Dendritic cell treated with granulocyte-macrophage colony-stimulating factor and Interleukin-4, amounts not matched to agents 40 ng/mL and 50 ng/mL, for 4 days (primary cell): ENCODE measurements at regions of chr2 and their contacts with region 1.

Region 1: DNA sequence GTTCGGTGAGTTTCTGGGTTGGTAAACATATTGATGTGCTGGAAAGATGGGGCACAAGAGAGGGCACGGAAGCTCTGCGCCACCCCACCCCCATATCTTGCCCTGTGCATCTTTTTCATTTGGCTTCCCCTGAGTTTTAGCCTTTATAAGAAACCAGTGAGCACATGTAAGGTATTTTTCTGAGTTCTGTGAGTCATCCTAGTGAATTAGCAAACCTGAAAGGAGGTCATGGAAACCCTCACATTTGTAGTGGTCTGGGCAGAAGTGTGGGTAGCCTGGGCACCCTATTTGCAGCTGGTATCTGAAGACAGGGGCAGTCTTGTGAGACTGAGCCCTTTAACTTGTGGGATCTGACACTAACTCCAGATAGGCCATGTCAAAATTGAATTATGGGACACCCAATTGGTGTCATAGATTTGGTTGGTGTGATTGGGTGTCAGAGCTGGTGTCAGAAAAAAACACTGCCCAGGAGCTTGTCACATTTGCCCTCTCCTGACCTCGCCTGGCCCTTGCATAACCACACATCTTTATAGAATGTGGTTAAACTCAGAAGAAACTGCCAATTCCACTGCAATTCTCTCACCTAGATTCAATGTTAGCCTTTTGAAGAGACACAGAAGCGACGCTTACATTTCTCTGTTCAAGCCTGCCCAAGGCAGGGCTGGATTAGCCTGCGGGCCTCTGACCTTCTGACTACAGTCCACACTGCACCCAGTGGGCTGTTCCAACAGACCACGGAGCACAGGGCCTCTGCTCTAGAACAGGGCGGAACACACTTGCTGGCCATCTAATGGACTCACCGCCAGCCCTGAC is 12.0 kb upstream of the GALM start:
- H3K4me3 Mint-ChIP-seq: no peak overlapping the region
- H3K27ac Mint-ChIP-seq: peak overlapping the region; percentile 75
- H3K4me1 Mint-ChIP-seq: peaks cover 38% of the 10 kb centered on the region
- H3K27me3 Mint-ChIP-seq: peaks cover 4% of the 10 kb centered on the region

Region 2: DNA sequence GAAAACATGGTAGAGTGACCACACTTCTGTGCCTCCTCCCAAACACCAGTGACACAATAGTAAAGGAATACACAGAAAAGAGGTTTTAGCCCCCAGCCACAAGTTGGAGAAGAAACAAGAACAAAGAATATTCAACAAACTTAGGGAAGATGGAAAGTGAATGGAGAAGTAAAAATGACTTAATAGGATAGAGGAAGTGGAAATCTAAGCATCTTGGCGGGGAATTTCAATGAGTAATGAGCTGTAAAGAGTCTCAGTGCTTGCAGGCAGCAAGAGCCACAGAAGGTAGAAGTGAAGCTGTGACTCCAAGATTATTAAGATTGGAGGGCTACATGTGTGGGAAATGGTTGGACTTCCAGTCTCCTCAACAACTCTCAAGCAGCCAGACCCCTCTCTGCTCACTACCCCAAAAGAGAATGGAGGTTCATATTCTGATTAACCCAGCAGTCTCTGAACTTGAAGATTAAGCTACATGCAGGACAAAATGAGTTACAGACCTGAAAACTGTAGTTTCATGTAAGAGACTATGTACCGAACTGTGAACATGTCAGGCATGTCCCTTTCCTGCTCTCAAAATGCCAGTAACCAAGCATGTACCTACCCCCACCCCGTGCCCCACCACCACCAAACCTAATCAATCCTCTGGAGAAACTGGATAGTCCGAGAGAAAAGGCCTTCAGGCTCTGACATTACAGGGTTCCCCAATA is 34.3 kb before region 1 on chr2:
- intact Hi-C with region 1: loop called (anchors 5 kb)
- H3K4me3 Mint-ChIP-seq: no peak overlapping the region
- H3K27ac Mint-ChIP-seq: peak overlapping the region; percentile 60
- H3K4me1 Mint-ChIP-seq: peaks cover 66% of the 10 kb centered on the region
- H3K27me3 Mint-ChIP-seq: peaks cover 5% of the 10 kb centered on the region